B cell (primary cell): ENCODE measurements at regions of chr2 and their contacts with region 1.

Region 1: DNA sequence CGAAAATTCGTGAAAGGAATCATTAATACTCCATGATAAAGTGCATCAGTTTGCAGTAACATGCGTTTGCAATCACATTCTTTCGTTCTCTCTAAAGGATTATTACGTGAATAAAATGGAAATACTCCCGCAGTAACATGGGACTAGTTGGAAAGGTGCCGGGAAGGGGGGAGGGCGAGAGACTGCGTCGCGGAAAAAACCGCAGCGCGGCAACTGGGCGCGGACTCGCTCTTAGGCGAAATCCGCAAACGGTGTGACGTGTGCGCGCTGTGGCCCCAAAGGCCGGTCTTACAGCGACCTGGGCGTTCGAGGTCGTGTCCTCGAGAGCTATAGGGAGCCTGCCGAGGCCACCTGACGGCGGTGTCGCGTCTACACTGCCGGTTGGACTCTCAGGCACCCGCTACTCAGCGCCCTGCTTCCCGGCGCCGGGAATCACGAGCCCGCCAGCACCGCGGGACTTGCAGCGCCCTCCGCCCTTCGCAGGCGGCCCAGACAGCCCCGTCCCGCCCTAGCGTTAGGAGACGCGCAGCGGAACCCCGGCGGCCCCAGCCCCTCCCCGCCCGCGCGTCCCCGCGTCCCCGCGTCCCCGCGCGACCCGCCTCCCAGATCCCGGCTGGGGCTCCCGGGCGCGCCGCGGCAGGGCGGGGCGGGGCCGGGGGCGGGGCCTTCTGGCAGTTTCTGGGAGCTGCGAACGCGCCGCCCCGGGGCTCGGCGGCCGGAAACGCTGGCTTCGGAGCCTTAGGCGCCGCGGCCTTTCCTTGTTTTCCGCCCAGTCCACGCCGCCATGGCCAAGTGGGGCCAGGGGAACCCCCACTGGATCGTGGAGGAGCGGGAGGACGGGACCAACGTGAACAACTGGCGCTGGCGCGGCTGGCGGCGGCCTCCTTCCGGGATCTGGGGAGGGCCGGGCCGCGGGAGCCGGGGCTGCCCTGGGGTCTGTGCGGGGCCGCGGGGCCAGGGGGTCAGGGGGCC is 15.1 kb downstream of the C2orf74 start:
- DNase-seq: peak; percentile 94
- ATAC-seq: peak; percentile 89
- H3K4me3 ChIP-seq: peak overlapping the region; percentile 69 to 97 (median 90)
- H3K4me3 Mint-ChIP-seq: peak overlapping the region; percentile 97
- H3K27ac ChIP-seq: peak overlapping the region; percentile 91 to 96
- H3K27ac Mint-ChIP-seq: peak overlapping the region; percentile 90
- H3K4me1 ChIP-seq: peaks cover 26 to 42% of the 10 kb centered on the region in 2 donors
- H3K4me1 Mint-ChIP-seq: peaks cover 48% of the 10 kb centered on the region
- H3K27me3 ChIP-seq: no peaks in the 10 kb centered on the region
- H3K27me3 Mint-ChIP-seq: no peaks in the 10 kb centered on the region
- CTCF ChIP-seq: no peak

Region 2: GRCh38 chr2:60794277-60794863 is 382.7 kb before region 1 on chr2:
- CTCF ChIA-PET with region 1: no interaction called
- POLR2A ChIA-PET with region 1: no interaction called
- intact Hi-C with region 1: loop called (anchors 1 kb)
- DNase-seq: peak; percentile 66
- ATAC-seq: no peak
- H3K4me3 ChIP-seq: no peak overlapping the region
- H3K4me3 Mint-ChIP-seq: no peak overlapping the region
- H3K27ac ChIP-seq: peak overlapping the region in 1 of 2 donors; percentile 23
- H3K27ac Mint-ChIP-seq: no peak overlapping the region
- H3K4me1 ChIP-seq: peaks cover 15 to 20% of the 10 kb centered on the region in 2 donors
- H3K4me1 Mint-ChIP-seq: peaks cover 28% of the 10 kb centered on the region
- H3K27me3 ChIP-seq: no peaks in the 10 kb centered on the region
- H3K27me3 Mint-ChIP-seq: no peaks in the 10 kb centered on the region
- CTCF ChIP-seq: peak; percentile 84

Region 3: DNA sequence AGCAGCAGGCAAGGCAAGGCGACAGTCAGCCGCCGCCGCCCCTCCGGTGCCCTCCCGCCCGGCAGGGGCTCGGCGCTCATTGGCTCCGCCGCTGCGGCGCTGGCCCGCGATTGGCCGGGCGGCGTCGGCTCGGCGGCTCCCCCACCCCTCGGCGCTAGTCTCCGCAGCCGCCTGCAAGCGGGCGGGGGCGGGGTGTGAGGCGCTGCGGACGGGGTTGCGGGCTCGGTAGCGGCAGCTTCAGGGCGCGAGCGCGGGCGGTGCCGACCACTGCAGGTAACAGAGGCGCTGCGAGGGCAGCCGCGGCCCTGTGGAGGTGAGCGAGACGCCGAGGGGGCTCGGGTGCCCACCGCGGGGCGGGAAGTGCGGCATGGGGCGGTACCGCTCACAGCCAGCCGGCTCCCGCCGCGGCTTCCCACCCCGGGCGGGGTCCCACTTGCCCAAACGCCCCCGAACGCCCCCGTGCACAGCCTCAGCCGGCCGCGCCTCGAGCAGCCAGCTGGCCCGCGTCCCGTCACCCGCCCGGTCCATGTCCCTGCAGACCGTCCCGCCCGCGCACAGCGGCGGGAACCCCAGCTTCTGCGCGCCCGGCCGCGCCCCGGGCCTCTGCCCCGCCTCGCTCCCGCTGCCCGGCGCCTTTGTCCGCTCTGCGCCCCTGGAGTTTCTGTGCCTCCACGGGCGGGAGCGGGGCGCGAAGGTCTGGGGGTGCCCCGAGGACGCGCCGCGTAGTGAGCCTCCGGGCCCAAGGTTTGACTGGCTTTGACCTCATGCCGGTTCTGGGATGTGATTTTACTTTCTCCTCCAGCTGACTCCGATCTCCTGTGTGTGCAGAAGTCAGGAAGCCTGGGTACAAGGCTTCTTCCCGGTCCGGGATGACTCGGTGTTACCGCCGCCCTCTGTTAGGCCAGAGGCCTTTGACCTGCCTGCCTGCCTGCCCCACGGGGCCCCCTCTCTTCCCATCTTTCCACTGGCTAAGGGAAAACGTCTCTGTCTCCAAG is 111.0 kb before region 1 on chr2 and contains the start of gene SANBR:
- CTCF ChIA-PET with region 1: no interaction called
- POLR2A ChIA-PET with region 1: no interaction called
- intact Hi-C with region 1: loop called (anchors 1 kb)
- DNase-seq: peak; percentile 89
- ATAC-seq: peak; percentile 98
- H3K4me3 ChIP-seq: peak within 1 kb of the TSS; percentile 45 to 81 (median 70)
- H3K4me3 Mint-ChIP-seq: peak within 1 kb of the TSS; percentile 96
- H3K27ac ChIP-seq: peak within 1 kb of the TSS in 1 of 2 donors; percentile 24
- H3K27ac Mint-ChIP-seq: peak within 1 kb of the TSS; percentile 89
- H3K4me1 ChIP-seq: peaks cover 12 to 17% of the 10 kb centered on the region in 2 donors
- H3K4me1 Mint-ChIP-seq: peaks cover 13% of the 10 kb centered on the region
- H3K27me3 ChIP-seq: no peaks in the 10 kb centered on the region
- H3K27me3 Mint-ChIP-seq: no peaks in the 10 kb centered on the region
- CTCF ChIP-seq: no peak
- total RNA-seq, gene SANBR: 6.6 and 7.4 TPM in 2 replicates

Region 4: DNA sequence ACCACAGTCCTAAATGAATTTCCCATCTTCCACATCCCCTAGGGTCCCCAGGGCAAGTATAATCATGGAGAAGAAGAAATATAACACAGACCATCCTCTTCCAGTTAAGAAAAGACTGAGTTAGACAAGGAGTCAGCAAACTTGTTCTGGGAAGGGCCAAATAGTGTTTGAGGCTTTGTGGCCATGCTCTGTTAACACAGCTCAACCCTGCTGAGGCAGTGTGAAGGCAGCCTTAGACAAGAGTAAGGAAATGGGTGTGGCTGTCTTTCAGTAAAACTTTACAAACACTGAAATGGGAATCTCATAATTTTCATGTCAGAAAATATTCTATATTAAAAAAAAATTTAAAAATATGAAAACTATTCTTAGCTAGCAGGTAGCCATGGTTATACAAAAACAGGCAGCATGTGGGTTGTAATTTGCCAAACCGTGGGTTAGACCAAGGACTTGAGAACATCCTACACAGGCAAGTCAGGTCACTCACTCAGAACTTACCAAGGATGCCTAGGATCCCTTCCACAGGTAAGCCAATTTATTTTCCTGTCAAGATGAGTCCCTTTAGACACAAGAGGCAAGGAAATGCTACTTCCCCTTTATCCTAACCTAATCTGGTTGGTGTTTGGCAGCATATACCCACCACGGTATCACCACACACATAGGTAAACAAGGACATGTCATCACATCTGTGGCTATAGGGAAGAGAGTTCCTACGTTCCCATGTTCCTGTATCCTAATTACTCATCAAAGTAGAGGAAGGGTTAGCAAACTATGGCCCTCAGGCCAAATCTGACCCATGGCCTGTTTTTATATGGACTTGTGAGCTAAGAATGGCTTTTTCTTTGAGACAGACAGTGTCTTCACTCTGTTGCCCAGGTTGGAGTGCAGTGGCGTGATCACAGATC is 16.9 kb after region 1 on chr2:
- CTCF ChIA-PET with region 1: no interaction called
- POLR2A ChIA-PET with region 1: interaction called, 10 read pairs
- intact Hi-C with region 1: no loop called
- DNase-seq: peak; percentile 27
- ATAC-seq: no peak
- H3K4me3 ChIP-seq: no peak overlapping the region
- H3K4me3 Mint-ChIP-seq: no peak overlapping the region
- H3K27ac ChIP-seq: peak overlapping the region; percentile 31 to 74
- H3K27ac Mint-ChIP-seq: peak overlapping the region; percentile 39
- H3K4me1 ChIP-seq: peaks cover 5 to 12% of the 10 kb centered on the region in 2 donors
- H3K4me1 Mint-ChIP-seq: peaks cover 13% of the 10 kb centered on the region
- H3K27me3 ChIP-seq: no peaks in the 10 kb centered on the region
- H3K27me3 Mint-ChIP-seq: no peaks in the 10 kb centered on the region
- CTCF ChIP-seq: no peak

Region 5: GRCh38 chr2:61233581-61233980 is 56.5 kb after region 1 on chr2:
- CTCF ChIA-PET with region 1: no interaction called
- POLR2A ChIA-PET with region 1: no interaction called
- intact Hi-C with region 1: no loop called
- DNase-seq: no peak
- ATAC-seq: no peak
- H3K4me3 ChIP-seq: no peak overlapping the region
- H3K4me3 Mint-ChIP-seq: no peak overlapping the region
- H3K27ac ChIP-seq: no peak overlapping the region
- H3K27ac Mint-ChIP-seq: no peak overlapping the region
- H3K4me1 ChIP-seq: peaks cover 9 to 10% of the 10 kb centered on the region in 2 donors
- H3K4me1 Mint-ChIP-seq: peaks cover 9% of the 10 kb centered on the region
- H3K27me3 ChIP-seq: no peaks in the 10 kb centered on the region
- H3K27me3 Mint-ChIP-seq: no peaks in the 10 kb centered on the region
- CTCF ChIP-seq: no peak

Region 6: GRCh38 chr2:61764035-61764800 is 587.2 kb after region 1 on chr2:
- CTCF ChIA-PET with region 1: no interaction called
- POLR2A ChIA-PET with region 1: interaction called, 3 read pairs
- intact Hi-C with region 1: loop called (anchors 1 kb)
- DNase-seq: peak; percentile 98
- ATAC-seq: peak; percentile 98
- H3K4me3 ChIP-seq: peak overlapping the region; percentile 89 to 94 (median 92)
- H3K4me3 Mint-ChIP-seq: peak overlapping the region; percentile 90
- H3K27ac ChIP-seq: peak overlapping the region; percentile 96 to 98
- H3K27ac Mint-ChIP-seq: peak overlapping the region; percentile 96
- H3K4me1 ChIP-seq: peaks cover 4 to 10% of the 10 kb centered on the region in 2 donors
- H3K4me1 Mint-ChIP-seq: peaks cover 14% of the 10 kb centered on the region
- H3K27me3 ChIP-seq: no peaks in the 10 kb centered on the region
- H3K27me3 Mint-ChIP-seq: peaks cover 2% of the 10 kb centered on the region
- CTCF ChIP-seq: no peak